Esophagus muscularis mucosa (tissue), 4 donors: ENCODE measurements at regions of chr12 and their contacts with region 1.

Region 1: GRCh38 chr12:91811481-91812287 is 334.0 kb downstream of the BTG1 start:
- DNase-seq: no peak
- H3K4me3 ChIP-seq: no peak overlapping the region
- H3K27ac ChIP-seq: no peak overlapping the region
- H3K4me1 ChIP-seq: peaks cover 0 to 5% (median 0%) of the 10 kb centered on the region in 4 donors
- H3K27me3 ChIP-seq: no peaks in the 10 kb centered on the region
- CTCF ChIP-seq: peak; percentile 76 to 82 (median 80)
- EP300 ChIP-seq: no peak
- POLR2A ChIP-seq: no peak

Region 2: GRCh38 chr12:91219511-91219910 is 592.2 kb before region 1 on chr12:
- intact Hi-C with region 1: no loop called
- DNase-seq: no peak
- H3K4me3 ChIP-seq: no peak overlapping the region
- H3K27ac ChIP-seq: no peak overlapping the region
- H3K4me1 ChIP-seq: no peaks in the 10 kb centered on the region
- H3K27me3 ChIP-seq: no peaks in the 10 kb centered on the region
- CTCF ChIP-seq: no peak
- EP300 ChIP-seq: no peak
- POLR2A ChIP-seq: no peak

Region 3: DNA sequence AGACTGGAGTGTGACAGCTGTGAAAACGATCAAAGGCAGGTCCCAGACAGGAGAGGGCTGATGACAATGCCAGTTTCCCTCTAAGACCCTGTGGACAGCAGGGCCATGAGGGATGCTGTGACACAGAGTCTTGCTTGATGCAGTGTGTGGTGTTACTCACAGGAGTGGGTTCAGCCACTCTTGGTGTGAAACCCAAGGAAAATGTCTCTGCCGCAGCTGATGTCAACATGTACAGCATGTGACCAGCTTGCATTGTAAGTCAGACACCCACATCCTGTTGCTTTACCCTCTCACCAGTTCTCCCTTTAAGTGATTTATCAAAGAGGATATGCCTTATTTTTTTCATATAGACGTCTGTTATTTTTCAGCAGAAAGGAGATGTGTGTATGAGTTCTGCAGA is 65.3 kb after region 1 on chr12:
- intact Hi-C with region 1: no loop called
- DNase-seq: no peak
- H3K4me3 ChIP-seq: no peak overlapping the region
- H3K27ac ChIP-seq: no peak overlapping the region
- H3K4me1 ChIP-seq: no peaks in the 10 kb centered on the region
- H3K27me3 ChIP-seq: no peaks in the 10 kb centered on the region
- CTCF ChIP-seq: no peak
- EP300 ChIP-seq: no peak
- POLR2A ChIP-seq: no peak

Region 4: GRCh38 chr12:92139634-92140150 is 328.0 kb after region 1 on chr12:
- intact Hi-C with region 1: loop called (anchors 2 kb)
- DNase-seq: no peak
- H3K4me3 ChIP-seq: peak overlapping the region; percentile 77 to 97 (median 91)
- H3K27ac ChIP-seq: peak overlapping the region; percentile 4 to 99 (median 76)
- H3K4me1 ChIP-seq: peaks cover 30 to 58% (median 51%) of the 10 kb centered on the region in 4 donors
- H3K27me3 ChIP-seq: no peaks in the 10 kb centered on the region
- CTCF ChIP-seq: no peak
- EP300 ChIP-seq: no peak
- POLR2A ChIP-seq: no peak

Region 5: GRCh38 chr12:92244036-92244435 is 432.4 kb after region 1 on chr12:
- intact Hi-C with region 1: loop called (anchors 2 kb)
- DNase-seq: no peak
- H3K4me3 ChIP-seq: no peak overlapping the region
- H3K27ac ChIP-seq: peak overlapping the region; percentile 14 to 75 (median 57)
- H3K4me1 ChIP-seq: peaks cover 12 to 23% (median 22%) of the 10 kb centered on the region in 4 donors
- H3K27me3 ChIP-seq: no peaks in the 10 kb centered on the region
- CTCF ChIP-seq: peak; percentile 26 to 38 (median 35)
- EP300 ChIP-seq: peak; percentile 54
- POLR2A ChIP-seq: no peak